ENCODE measurements at regions of chr10 and their contacts with region 1.

Region 1: GRCh38 chr10:67697724-67698131 is 1.7 kb upstream of the CTNNA3 start:
- DNase-seq: peak; percentile 10
- H3K4me3 Mint-ChIP-seq: no peak overlapping the region
- H3K27ac Mint-ChIP-seq: no peak overlapping the region
- H3K4me1 Mint-ChIP-seq: no peaks in the 10 kb centered on the region
- H3K27me3 Mint-ChIP-seq: peaks cover 10% of the 10 kb centered on the region

Region 2: GRCh38 chr10:67487199-67487598 is 210.5 kb before region 1 on chr10:
- CTCF ChIA-PET with region 1: no interaction called
- intact Hi-C with region 1: no loop called
- DNase-seq: no peak
- H3K4me3 Mint-ChIP-seq: no peak overlapping the region
- H3K27ac Mint-ChIP-seq: no peak overlapping the region
- H3K4me1 Mint-ChIP-seq: no peaks in the 10 kb centered on the region
- H3K27me3 Mint-ChIP-seq: no peaks in the 10 kb centered on the region

Region 3: DNA sequence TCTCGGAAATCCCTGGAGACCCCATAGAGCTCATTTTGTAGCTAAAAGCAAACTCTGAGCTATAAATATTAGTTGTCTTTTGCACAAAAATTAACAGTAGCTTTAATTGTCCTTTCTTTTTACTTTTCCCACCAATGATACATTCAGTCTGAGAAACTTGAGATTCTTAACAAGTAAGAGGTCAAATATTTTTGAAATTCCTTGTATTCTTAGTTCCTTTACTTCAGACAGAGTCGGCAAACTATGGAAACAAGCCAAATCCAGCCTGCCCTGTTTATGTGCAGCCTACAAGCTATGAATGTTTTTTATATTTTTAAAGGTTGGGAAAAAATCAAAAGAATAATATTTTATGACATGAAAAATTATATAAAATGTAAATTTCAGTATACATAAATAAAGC is 148.3 kb before region 1 on chr10:
- CTCF ChIA-PET with region 1: no interaction called
- intact Hi-C with region 1: no loop called
- DNase-seq: no peak
- H3K4me3 Mint-ChIP-seq: no peak overlapping the region
- H3K27ac Mint-ChIP-seq: no peak overlapping the region
- H3K4me1 Mint-ChIP-seq: no peaks in the 10 kb centered on the region
- H3K27me3 Mint-ChIP-seq: peaks cover 3% of the 10 kb centered on the region

Region 4: DNA sequence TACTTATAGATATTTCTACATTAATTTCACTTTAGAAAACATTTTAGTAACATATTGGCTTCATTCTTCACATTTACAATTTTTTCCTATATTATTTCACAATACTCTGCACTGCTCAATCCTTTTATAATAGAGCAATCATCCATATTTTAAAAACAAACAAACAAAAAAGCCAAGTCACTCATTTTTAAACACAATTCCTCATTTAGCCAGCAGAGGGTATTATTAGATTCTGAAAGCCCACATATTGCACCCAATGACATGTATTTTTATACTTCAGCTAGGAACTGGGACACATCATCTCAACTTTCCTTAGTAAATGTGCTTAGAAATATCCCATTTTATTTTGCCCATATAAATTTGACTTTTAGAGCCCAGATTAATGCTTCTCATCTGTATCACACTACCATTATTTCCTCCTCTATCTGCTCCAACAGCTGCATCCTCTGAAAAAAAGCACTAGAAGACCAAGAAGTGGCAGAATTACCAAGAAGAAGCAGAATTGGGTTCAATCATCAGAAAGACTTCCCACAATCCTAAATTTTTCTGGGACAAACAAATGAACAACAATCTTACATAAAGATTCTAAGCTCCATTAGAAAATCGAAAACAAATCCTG is 31.2 kb before region 1 on chr10:
- CTCF ChIA-PET with region 1: interaction called, 11 read pairs
- intact Hi-C with region 1: loop called (anchors 2 kb)
- DNase-seq: no peak
- H3K4me3 Mint-ChIP-seq: no peak overlapping the region
- H3K27ac Mint-ChIP-seq: no peak overlapping the region
- H3K4me1 Mint-ChIP-seq: no peaks in the 10 kb centered on the region
- H3K27me3 Mint-ChIP-seq: no peaks in the 10 kb centered on the region

Region 5: GRCh38 chr10:67770537-67770936 is 72.8 kb after region 1 on chr10:
- CTCF ChIA-PET with region 1: interaction called, 13 read pairs
- intact Hi-C with region 1: no loop called
- DNase-seq: no peak
- H3K4me3 Mint-ChIP-seq: no peak overlapping the region
- H3K27ac Mint-ChIP-seq: no peak overlapping the region
- H3K4me1 Mint-ChIP-seq: peaks cover 5% of the 10 kb centered on the region
- H3K27me3 Mint-ChIP-seq: no peaks in the 10 kb centered on the region

Measured in activated naive CD4-positive, alpha-beta T cell treated with anti-CD3 and anti-CD28 coated beads for 36 hours (primary cell).